ENCODE measurements at regions of chr11 and their contacts with region 1.

Region 1: GRCh38 chr11:126366065-126366785 is 10.7 kb downstream of the ST3GAL4 start:
- DNase-seq: peak in 1 of 2 experiments; percentile 25
- H3K4me3 ChIP-seq: no peak overlapping the region
- H3K27ac ChIP-seq: peak overlapping the region; percentile 41
- H3K4me1 ChIP-seq: peaks cover 61% of the 10 kb centered on the region
- H3K27me3 ChIP-seq: no peaks in the 10 kb centered on the region
- CTCF ChIP-seq: no peak

Region 2: DNA sequence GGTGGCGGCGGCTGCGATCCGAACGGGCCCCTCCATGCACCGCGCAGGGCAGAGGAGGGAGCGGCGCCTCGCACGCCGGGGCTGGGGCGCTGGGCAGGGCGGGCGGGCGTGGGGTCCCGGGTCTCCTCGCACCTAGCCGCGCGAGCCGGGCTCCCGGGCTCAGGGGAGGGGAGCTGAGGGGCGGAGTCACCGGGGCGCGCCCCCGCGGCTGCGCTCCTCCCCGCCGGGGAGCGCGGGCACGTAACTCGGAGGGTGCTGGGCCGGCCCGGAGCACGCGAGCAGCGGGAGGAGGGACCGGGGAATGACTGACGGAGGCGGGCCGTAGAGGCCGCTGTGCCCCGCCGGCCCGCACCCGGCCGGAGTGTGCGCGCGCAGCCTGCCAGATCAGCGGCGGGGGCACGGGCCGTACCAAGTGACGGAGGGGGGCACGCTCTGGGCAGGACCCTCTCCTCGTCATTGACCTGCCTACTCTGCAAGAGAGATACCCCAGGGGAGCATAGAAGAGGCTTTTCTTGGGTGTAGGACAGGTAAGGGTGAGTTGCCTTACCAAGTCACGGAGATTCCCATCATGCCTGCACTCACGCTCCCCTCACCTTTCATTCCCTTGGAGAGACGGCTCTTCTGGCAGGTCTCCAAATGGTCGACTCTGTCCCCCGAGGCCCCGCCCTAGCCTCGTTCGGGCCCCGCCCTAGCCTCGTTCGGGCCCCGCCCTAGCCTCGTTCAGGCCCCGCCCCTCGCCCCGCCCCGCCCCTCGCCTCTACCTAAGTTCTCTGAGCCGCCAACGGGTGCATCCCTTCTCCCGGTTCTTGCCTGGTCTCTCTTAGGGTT is 303.3 kb before region 1 on chr11 and contains the start of gene CDON:
- CTCF ChIA-PET with region 1: no interaction called
- POLR2A ChIA-PET with region 1: no interaction called
- intact Hi-C with region 1: no loop called
- DNase-seq: peak; percentile 80 to 92
- H3K4me3 ChIP-seq: peak within 1 kb of the TSS; percentile 63
- H3K27ac ChIP-seq: peak within 1 kb of the TSS; percentile 89
- H3K4me1 ChIP-seq: peaks cover 16% of the 10 kb centered on the region; the same call in 1 of the 2 replicates
- H3K27me3 ChIP-seq: no peaks in the 10 kb centered on the region
- CTCF ChIP-seq: no peak
- total RNA-seq, gene CDON: 10.0 and 11.2 TPM in 2 replicates

Region 3: GRCh38 chr11:126146433-126147192 is 219.6 kb before region 1 on chr11:
- CTCF ChIA-PET with region 1: no interaction called
- POLR2A ChIA-PET with region 1: no interaction called
- intact Hi-C with region 1: no loop called
- DNase-seq: no peak
- H3K4me3 ChIP-seq: no peak overlapping the region
- H3K27ac ChIP-seq: no peak overlapping the region
- H3K4me1 ChIP-seq: peaks cover 13% of the 10 kb centered on the region
- H3K27me3 ChIP-seq: no peaks in the 10 kb centered on the region; the same call in 1 of the 2 replicates
- CTCF ChIP-seq: no peak

Region 4: DNA sequence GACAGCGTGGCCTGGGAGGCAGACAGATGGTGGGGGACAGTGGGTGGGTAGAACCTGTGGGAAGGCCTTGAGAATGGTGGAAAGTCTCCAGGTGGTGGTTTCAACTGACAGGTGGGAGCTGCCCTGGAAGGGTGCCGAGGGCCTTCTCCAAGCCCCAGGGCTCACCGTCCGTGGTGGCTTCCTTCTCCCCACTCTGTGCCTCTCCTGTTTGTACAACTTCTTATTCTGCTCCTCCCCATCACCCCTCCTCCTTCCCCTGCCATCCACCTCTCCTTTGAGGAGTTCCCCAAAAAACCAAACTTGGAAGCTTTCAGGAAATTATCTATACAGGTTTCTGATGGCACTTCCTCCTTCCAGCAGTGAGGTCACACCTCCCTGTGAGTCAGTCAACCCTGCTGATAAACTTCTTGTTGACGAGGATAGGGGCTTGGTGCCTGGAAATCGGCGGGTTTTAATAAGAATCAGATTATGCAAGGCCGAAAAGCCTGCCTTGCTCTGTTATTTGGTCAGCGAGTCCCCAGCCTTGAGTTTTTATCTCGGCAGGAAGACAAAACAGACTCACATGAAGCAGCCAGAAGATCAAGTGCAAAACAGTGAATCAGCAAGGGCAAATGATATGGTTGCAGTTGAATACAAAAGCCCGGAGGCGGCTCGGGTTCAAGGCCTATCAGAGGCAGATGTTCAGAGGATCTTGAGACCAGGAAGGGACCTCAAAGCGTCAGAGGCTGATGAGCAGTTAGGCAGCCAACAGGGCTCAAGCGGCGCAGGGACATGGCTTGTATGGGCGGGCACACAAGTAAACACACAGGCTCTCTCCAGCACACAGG is 20.3 kb before region 1 on chr11:
- CTCF ChIA-PET with region 1: no interaction called
- POLR2A ChIA-PET with region 1: interaction called, 12 read pairs
- intact Hi-C with region 1: no loop called
- DNase-seq: peak; percentile 62 to 96
- H3K4me3 ChIP-seq: peak overlapping the region; percentile 27; the same call in 1 of the 2 replicates
- H3K27ac ChIP-seq: peak overlapping the region; percentile 90
- H3K4me1 ChIP-seq: peaks cover 97% of the 10 kb centered on the region
- H3K27me3 ChIP-seq: no peaks in the 10 kb centered on the region
- CTCF ChIP-seq: no peak

Region 5: DNA sequence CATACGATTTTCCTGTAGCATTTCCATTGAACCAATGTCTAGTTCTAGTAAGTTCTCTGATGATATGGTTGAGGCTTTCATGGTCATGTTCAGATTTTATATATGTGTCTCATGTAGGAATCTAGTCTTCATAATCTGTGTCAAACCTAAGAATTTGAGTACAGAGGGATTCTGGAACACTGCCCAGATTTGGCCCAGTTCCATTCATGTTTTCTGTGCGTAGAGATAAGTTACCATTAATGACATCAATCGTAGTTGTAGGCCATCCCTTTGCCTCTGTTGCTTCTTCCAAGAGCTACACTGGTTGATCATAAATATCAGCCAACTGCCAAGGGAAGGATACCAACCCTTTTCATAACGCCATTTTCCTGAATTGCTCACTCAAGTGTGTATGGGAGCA is 12.5 kb after region 1 on chr11:
- CTCF ChIA-PET with region 1: interaction called, 6 read pairs
- POLR2A ChIA-PET with region 1: no interaction called
- intact Hi-C with region 1: loop called (anchors 2 kb)
- DNase-seq: no peak
- H3K4me3 ChIP-seq: no peak overlapping the region
- H3K27ac ChIP-seq: no peak overlapping the region
- H3K4me1 ChIP-seq: peaks cover 32% of the 10 kb centered on the region
- H3K27me3 ChIP-seq: no peaks in the 10 kb centered on the region
- CTCF ChIP-seq: no peak

Region 6: GRCh38 chr11:126416542-126417090 is 50.4 kb after region 1 on chr11:
- CTCF ChIA-PET with region 1: no interaction called
- POLR2A ChIA-PET with region 1: no interaction called
- intact Hi-C with region 1: no loop called
- DNase-seq: no peak
- H3K4me3 ChIP-seq: no peak overlapping the region
- H3K27ac ChIP-seq: no peak overlapping the region
- H3K4me1 ChIP-seq: no peaks in the 10 kb centered on the region
- H3K27me3 ChIP-seq: no peaks in the 10 kb centered on the region
- CTCF ChIP-seq: no peak

Measured in PC-9 (cell line).